ENCODE measurements at regions of chr1 and their contacts with region 1.

Region 1: DNA sequence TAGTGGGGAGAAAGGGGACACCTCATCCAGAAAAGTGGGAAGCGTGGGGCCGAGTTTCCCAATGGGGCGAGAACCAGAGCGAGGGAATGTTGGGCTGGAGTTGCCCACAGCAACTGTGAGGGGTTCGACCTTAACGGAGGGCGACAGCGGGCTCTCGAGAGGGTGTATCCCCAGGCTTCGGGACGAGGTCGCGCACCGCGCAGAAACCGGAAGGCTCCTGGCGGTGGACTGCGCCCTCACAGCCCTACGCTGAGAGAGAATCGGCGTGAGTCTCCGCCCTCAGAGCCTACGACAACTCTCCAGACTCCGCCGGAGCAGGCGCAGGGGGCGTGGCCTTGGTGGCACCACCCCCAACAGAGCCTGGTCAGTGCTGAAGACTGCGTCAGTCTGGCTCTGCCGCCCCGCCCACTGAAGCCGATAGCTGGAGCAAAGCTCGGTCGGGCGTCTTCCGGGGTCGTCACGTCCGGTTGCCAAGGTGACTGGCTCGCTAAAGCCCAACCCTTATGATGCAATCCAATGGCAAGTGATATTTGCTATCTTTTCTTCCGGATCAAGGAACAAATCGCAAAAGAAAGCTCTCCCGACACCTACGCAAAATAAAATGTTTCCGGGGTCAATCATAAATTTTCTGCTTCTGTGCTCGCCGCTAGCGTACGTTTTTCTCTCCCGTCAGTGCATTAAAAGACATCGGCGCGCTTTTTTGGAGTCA is at the start of gene LRIF1:
- DNase-seq: peak; percentile 100
- H3K4me3 ChIP-seq: peak within 1 kb of the TSS; percentile 65 to 76 (median 68)
- H3K4me3 Mint-ChIP-seq: peak within 1 kb of the TSS; percentile 88 to 96
- H3K27ac ChIP-seq: peak within 1 kb of the TSS; percentile 96 to 100
- H3K27ac Mint-ChIP-seq: peak within 1 kb of the TSS; percentile 98 to 100 (median 99)
- H3K4me1 ChIP-seq: peaks cover 9 to 21% of the 10 kb centered on the region in 2 donors
- H3K4me1 Mint-ChIP-seq: peaks cover 8% of the 10 kb centered on the region
- H3K27me3 ChIP-seq: peaks cover 14 to 23% of the 10 kb centered on the region in 2 donors
- H3K27me3 Mint-ChIP-seq: peaks cover 17 to 23% (median 19%) of the 10 kb centered on the region in 3 donors
- CTCF ChIP-seq: peak; percentile 51
- polyA plus RNA-seq, gene LRIF1: 1.8 to 8.2 (median 4.0) TPM

Region 2: DNA sequence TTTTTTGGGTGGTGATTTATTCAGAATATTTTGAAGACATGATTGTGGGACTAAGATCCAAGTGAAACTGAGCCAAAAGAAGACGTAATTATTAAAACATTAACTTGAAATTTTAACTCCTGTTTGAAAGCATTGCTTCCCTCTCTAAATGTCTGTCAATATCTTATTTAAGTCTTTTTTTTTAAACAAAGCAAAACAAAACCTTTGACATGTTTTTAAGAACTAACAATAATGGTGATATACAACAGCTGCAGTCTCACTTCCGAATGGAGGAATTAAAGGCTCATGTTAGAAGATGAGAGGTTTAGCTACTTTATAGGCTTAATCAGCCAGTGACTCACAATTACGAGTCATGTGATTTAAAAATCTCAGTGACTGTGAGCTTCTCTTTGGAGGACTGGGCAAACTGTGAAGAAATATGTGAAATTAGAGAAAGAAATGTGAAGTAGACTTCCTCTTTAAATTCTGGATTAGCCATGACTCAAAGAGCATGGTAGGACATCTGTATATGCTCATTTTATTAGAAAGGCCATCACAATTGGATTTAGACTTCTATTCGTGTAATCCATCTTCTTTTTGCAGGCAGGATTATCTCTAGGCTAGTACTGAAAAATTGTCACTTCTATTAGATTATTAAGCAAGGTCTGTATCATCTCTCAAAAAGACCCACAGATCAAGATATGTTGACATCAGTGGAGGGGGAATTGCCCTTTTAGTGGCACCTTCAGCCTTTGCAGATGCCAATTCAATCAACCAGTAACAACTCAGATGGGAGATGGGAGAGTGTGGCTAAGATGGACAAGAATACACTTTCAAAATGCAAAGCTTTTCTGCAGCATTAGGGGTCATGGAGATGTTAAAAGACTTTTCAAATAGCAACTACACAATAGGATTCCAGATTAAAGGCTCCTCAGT is 317.8 kb before region 1 on chr1:
- intact Hi-C with region 1: loop called in 1 of 2 experiments (anchors 10 kb)
- DNase-seq: peak; percentile 93 to 99 (median 97)
- H3K4me3 ChIP-seq: no peak overlapping the region
- H3K4me3 Mint-ChIP-seq: peak overlapping the region in 1 of 2 donors; percentile 7
- H3K27ac ChIP-seq: peak overlapping the region in 1 of 2 donors; percentile 85
- H3K27ac Mint-ChIP-seq: peak overlapping the region; percentile 91 to 98 (median 96)
- H3K4me1 ChIP-seq: peaks cover 64 to 71% of the 10 kb centered on the region in 2 donors
- H3K4me1 Mint-ChIP-seq: peaks cover 55% of the 10 kb centered on the region
- H3K27me3 ChIP-seq: no peaks in the 10 kb centered on the region
- H3K27me3 Mint-ChIP-seq: peaks cover 0 to 6% (median 0%) of the 10 kb centered on the region in 3 donors
- CTCF ChIP-seq: no peak

Region 3: DNA sequence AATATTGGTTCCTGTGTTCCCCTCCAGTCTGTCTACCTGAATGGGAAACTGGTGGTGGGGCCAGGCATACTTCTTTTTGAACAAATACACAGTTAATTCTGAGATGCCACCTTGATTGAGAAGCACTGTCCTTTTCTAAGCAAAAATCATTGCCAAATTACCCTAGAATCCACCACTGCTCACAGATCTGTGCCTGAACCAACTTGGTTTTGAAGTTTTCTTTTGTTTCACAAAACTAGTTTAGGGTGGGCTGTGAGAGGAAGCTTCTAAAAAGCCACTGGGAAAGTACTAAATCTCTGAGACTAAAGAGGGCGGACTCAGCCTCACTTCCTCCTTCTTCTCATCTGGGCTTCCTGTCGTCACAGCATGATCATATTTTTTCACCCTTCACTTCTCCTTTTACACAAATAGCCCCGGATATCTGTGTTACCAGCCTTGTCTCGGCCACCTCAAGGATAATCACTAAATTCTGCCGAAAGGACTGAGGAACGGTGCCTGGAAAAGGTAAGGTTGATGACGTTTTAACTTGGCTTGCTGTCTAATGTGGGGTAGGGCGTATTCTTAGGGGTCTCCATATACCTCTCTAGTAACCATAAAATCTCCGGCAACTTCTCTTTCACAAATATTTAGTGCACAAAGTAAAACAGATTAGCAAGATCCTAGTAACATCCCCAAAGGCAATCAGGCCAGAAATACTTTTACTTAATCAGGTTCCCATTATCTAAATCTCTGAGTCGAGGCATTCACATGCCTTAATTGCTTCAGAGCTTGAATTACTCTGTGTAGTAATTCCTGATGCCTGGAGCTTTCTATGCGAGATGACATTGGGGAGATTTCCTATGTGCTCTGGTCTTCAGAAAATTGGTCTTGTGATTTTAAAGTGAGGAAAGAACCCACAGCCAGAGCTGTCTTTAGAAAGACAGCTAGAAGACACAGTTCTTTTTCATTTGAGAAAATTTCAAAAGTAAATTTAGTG is 90.8 kb before region 1 on chr1 and contains the start of gene CD53:
- intact Hi-C with region 1: loop called (anchors 2 to 10 kb)
- DNase-seq: peak; percentile 91 to 96 (median 95)
- H3K4me3 ChIP-seq: peak within 1 kb of the TSS; percentile 80 to 100 (median 98)
- H3K4me3 Mint-ChIP-seq: peak within 1 kb of the TSS; percentile 94 to 99
- H3K27ac ChIP-seq: peak within 1 kb of the TSS; percentile 90 to 99
- H3K27ac Mint-ChIP-seq: peak within 1 kb of the TSS; percentile 99 to 100 (median 100)
- H3K4me1 ChIP-seq: peaks cover 40 to 54% of the 10 kb centered on the region in 2 donors
- H3K4me1 Mint-ChIP-seq: peaks cover 54% of the 10 kb centered on the region
- H3K27me3 ChIP-seq: no peaks in the 10 kb centered on the region
- H3K27me3 Mint-ChIP-seq: peaks cover 0 to 2% (median 0%) of the 10 kb centered on the region in 3 donors
- CTCF ChIP-seq: no peak
- polyA plus RNA-seq, gene CD53: 826 to 1,222 (median 1,107) TPM

Region 4: GRCh38 chr1:110948038-110948810 is 15.6 kb before region 1 on chr1:
- intact Hi-C with region 1: no loop called
- DNase-seq: peak in 2 of 3 donors; percentile 12 to 13
- H3K4me3 ChIP-seq: no peak overlapping the region
- H3K4me3 Mint-ChIP-seq: no peak overlapping the region
- H3K27ac ChIP-seq: no peak overlapping the region
- H3K27ac Mint-ChIP-seq: peak overlapping the region in 2 of 7 donors; percentile 44 to 59
- H3K4me1 ChIP-seq: peaks cover 0 to 3% of the 10 kb centered on the region in 2 donors
- H3K4me1 Mint-ChIP-seq: peaks cover 19% of the 10 kb centered on the region
- H3K27me3 ChIP-seq: no peaks in the 10 kb centered on the region
- H3K27me3 Mint-ChIP-seq: no peaks in the 10 kb centered on the region
- CTCF ChIP-seq: no peak

Region 5: GRCh38 chr1:111448918-111449702 is 485.3 kb after region 1 on chr1 and contains the starts of genes ATP5PB and WDR77:
- intact Hi-C with region 1: loop called in 1 of 2 experiments (anchors 5 kb)
- DNase-seq: peak; percentile 98 to 100 (median 99)
- H3K4me3 ChIP-seq: peak within 1 kb of the TSS; percentile 90 to 97 (median 94)
- H3K4me3 Mint-ChIP-seq: peak within 1 kb of the TSS; percentile 99 to 100
- H3K27ac ChIP-seq: peak within 1 kb of the TSS; percentile 87 to 95
- H3K27ac Mint-ChIP-seq: peak within 1 kb of the TSS; percentile 98 to 100 (median 99)
- H3K4me1 ChIP-seq: peaks cover 25 to 41% of the 10 kb centered on the region in 2 donors
- H3K4me1 Mint-ChIP-seq: peaks cover 49% of the 10 kb centered on the region
- H3K27me3 ChIP-seq: no peaks in the 10 kb centered on the region
- H3K27me3 Mint-ChIP-seq: peaks cover 0 to 2% (median 0%) of the 10 kb centered on the region in 3 donors
- CTCF ChIP-seq: no peak
- polyA plus RNA-seq, gene ATP5PB: 112 to 597 (median 557) TPM
- polyA plus RNA-seq, gene WDR77: 26.4 to 62.2 (median 28.1) TPM

Region 6: DNA sequence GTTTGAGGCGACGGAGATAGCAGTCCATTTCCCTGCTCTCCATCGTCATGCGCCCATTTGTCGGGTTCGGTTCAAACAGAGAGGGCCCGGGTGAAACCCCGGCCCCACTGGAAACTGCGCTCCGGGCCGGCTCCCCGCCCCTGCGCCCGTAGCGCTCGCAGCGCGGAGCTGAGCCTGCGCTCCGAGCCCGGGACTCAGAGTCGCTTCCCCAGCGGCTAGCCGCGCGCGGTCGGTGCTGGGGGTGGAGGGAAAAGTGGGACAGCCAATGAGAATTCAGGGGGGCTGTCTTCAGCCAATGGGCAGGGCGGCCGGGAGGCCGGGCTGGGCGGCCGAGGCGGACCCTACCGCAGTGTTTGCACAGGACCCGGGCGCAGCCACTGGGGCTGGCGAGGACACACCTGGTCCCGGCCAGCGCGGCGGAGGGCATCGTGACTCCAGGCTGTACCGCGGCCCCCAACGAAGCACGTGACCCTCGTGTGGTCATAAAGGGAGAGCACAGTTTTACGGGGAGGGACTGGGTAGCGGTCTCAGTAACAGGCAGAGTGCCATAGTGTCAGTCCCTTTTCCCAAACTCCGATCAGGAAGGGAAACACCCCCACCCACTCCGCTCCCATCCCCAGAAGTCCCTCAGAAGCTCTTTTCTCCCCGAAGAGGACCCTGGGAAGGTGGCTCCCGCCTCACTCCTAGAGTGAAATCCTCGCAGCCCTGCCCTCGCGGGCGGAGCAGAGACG is 775.5 kb after region 1 on chr1 and contains the start of gene INKA2:
- intact Hi-C with region 1: loop called in 1 of 2 experiments (anchors 10 kb)
- DNase-seq: peak; percentile 80 to 86 (median 82)
- H3K4me3 ChIP-seq: peak within 1 kb of the TSS; percentile 46 to 79 (median 63)
- H3K4me3 Mint-ChIP-seq: peak within 1 kb of the TSS; percentile 89 to 98
- H3K27ac ChIP-seq: peak within 1 kb of the TSS; percentile 78 to 81
- H3K27ac Mint-ChIP-seq: peak within 1 kb of the TSS; percentile 83 to 99 (median 95)
- H3K4me1 ChIP-seq: peaks cover 58 to 62% of the 10 kb centered on the region in 2 donors
- H3K4me1 Mint-ChIP-seq: peaks cover 31% of the 10 kb centered on the region
- H3K27me3 ChIP-seq: peaks cover 22 to 54% of the 10 kb centered on the region in 2 donors
- H3K27me3 Mint-ChIP-seq: peaks cover 51 to 70% (median 54%) of the 10 kb centered on the region in 3 donors
- CTCF ChIP-seq: no peak
- polyA plus RNA-seq, gene INKA2: 1.8 to 6.6 (median 2.0) TPM

Measured in CD14-positive monocyte (primary cell).